ENCODE measurements at regions of chr2 and their contacts with region 1.

Region 1: GRCh38 chr2:39124000-39124745 is 3.3 kb upstream of the SOS1 start:
- DNase-seq: peak; percentile 93
- ATAC-seq: peak; percentile 67
- H3K4me3 Mint-ChIP-seq: peak overlapping the region; percentile 90
- H3K27ac Mint-ChIP-seq: peak overlapping the region; percentile 92
- H3K4me1 Mint-ChIP-seq: peaks cover 56% of the 10 kb centered on the region
- H3K27me3 Mint-ChIP-seq: no peaks in the 10 kb centered on the region
- CTCF ChIP-seq: no peak

Region 2: GRCh38 chr2:37570773-37571586 is 1553.2 kb before region 1 on chr2:
- CTCF ChIA-PET with region 1: no interaction called
- POLR2A ChIA-PET with region 1: no interaction called
- intact Hi-C with region 1: no loop called
- DNase-seq: no peak
- ATAC-seq: peak; percentile 48
- H3K4me3 Mint-ChIP-seq: no peak overlapping the region
- H3K27ac Mint-ChIP-seq: peak overlapping the region; percentile 38
- H3K4me1 Mint-ChIP-seq: peaks cover 28% of the 10 kb centered on the region
- H3K27me3 Mint-ChIP-seq: no peaks in the 10 kb centered on the region
- CTCF ChIP-seq: no peak

Region 3: GRCh38 chr2:37653805-37654378 is 1470.3 kb before region 1 on chr2:
- CTCF ChIA-PET with region 1: no interaction called
- POLR2A ChIA-PET with region 1: no interaction called
- intact Hi-C with region 1: loop called (anchors 5 kb)
- DNase-seq: peak; percentile 52
- ATAC-seq: peak; percentile 62
- H3K4me3 Mint-ChIP-seq: peak overlapping the region; percentile 67
- H3K27ac Mint-ChIP-seq: peak overlapping the region; percentile 78
- H3K4me1 Mint-ChIP-seq: peaks cover 95% of the 10 kb centered on the region
- H3K27me3 Mint-ChIP-seq: no peaks in the 10 kb centered on the region
- CTCF ChIP-seq: no peak

Region 4: GRCh38 chr2:39059366-39059952 is 64.7 kb before region 1 on chr2:
- CTCF ChIA-PET with region 1: interaction called, 19 read pairs
- POLR2A ChIA-PET with region 1: no interaction called
- intact Hi-C with region 1: loop called (anchors 1 kb)
- DNase-seq: no peak
- ATAC-seq: no peak
- H3K4me3 Mint-ChIP-seq: no peak overlapping the region
- H3K27ac Mint-ChIP-seq: no peak overlapping the region
- H3K4me1 Mint-ChIP-seq: no peaks in the 10 kb centered on the region
- H3K27me3 Mint-ChIP-seq: no peaks in the 10 kb centered on the region
- CTCF ChIP-seq: peak; percentile 67

Region 5: GRCh38 chr2:39141331-39142271 is 17.4 kb after region 1 on chr2:
- CTCF ChIA-PET with region 1: interaction called, 10 read pairs
- POLR2A ChIA-PET with region 1: interaction called, 52 read pairs
- intact Hi-C with region 1: loop called (anchors 1 kb)
- DNase-seq: no peak
- ATAC-seq: peak; percentile 86
- H3K4me3 Mint-ChIP-seq: peak overlapping the region; percentile 72
- H3K27ac Mint-ChIP-seq: peak overlapping the region; percentile 91
- H3K4me1 Mint-ChIP-seq: peaks cover 50% of the 10 kb centered on the region
- H3K27me3 Mint-ChIP-seq: no peaks in the 10 kb centered on the region
- CTCF ChIP-seq: no peak

Region 6: DNA sequence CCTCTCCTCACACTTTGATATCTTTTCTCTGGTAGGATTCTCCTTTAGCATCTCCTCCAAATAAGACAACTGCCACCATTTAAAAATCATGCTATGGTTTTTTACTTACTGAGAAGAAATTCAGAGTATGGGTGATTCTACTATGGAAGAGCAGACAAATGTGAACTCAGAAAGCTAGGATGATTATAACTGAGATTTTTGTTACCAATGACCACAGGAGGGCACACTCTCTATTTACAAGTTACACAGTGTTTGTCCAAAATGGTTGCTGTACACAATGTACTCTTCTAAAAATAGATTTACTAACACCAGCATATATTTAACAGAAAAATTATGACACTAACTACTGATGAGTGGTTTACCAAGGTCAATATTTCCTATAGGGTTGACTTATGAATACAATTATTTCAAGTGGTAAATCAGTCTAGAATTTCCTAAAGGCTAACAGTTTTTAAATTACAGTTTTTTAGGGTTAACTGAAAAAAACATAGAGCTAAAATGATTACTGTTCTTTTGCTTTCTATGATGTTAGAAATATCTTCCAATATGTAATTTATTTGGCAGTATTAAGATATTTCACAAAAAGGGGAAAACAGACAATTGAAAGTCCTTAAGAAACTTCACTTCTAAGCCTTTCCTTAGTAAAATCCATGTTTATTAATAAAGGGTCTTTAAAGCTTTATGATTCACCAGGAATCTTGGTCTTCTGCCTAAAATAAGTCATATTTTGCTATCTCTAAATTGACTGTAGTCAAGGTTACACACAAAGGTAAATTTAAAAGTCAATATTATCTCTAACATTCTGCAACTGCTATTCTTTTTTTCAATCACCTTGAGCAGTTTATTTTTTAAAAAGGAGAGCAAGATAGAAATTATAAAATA is 255.7 kb after region 1 on chr2:
- CTCF ChIA-PET with region 1: no interaction called
- POLR2A ChIA-PET with region 1: no interaction called
- intact Hi-C with region 1: loop called (anchors 1 kb)
- DNase-seq: no peak
- ATAC-seq: peak; percentile 35
- H3K4me3 Mint-ChIP-seq: no peak overlapping the region
- H3K27ac Mint-ChIP-seq: no peak overlapping the region
- H3K4me1 Mint-ChIP-seq: peaks cover 30% of the 10 kb centered on the region
- H3K27me3 Mint-ChIP-seq: no peaks in the 10 kb centered on the region
- CTCF ChIP-seq: no peak

Region 7: DNA sequence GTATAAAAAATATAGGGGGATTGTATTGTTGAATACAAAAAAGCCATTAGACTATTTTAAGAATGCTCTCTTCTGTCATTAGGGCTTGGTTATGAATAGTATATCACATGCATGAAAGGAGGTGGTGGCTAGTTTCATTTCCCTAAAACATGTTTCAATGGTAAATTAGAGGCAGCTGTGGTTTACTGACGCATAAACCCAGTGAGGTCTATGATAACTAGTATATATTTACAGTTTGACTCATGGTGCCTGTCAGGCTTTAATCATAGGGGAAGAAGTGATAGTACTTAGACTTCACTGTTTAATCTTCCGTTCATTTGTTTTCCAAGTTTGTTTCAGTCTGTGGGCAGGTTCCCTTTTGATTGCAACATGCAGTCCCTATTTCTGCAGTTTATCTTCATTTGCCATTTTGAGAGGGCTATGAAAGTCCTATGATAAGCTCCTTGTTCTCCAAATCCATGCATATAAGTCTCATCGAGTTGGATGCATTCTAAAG is 368.0 kb after region 1 on chr2:
- CTCF ChIA-PET with region 1: no interaction called
- POLR2A ChIA-PET with region 1: no interaction called
- intact Hi-C with region 1: loop called (anchors 1 kb)
- DNase-seq: no peak
- ATAC-seq: peak; percentile 92
- H3K4me3 Mint-ChIP-seq: peak overlapping the region; percentile 66
- H3K27ac Mint-ChIP-seq: peak overlapping the region; percentile 87
- H3K4me1 Mint-ChIP-seq: peaks cover 57% of the 10 kb centered on the region
- H3K27me3 Mint-ChIP-seq: peaks cover 10% of the 10 kb centered on the region
- CTCF ChIP-seq: no peak